ENCODE measurements at regions of chr2 and their contacts with region 1.

Region 1: DNA sequence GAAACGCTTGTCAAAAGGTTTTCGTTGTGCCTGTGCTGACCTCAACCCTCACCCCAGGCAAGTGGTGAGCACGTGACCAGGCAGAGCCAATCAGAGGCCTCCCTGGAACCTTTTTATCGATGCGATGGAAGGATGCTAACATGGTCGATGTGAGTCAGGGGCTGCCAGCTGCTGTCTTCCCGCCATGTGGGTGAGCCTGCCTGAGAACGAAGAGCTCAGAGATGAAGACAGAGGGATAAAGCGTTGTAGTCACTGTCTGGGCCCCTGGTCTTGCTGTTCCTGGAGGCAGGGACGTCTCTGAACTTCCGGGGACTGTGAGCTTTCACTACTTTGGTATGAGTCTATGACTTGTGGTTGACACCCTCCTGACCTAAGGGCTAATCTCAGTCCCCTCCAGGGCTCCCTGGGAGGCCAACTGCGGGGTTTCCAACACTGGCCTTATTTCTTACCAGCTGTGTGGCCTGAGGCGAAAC is 18.6 kb downstream of the DNMT3A start:
- DNase-seq: peak; percentile 51 to 79 (median 64)
- H3K4me3 ChIP-seq: peak overlapping the region in 1 of 2 donors; percentile 46
- H3K4me3 Mint-ChIP-seq: peak overlapping the region; percentile 85 to 91 (median 88)
- H3K27ac ChIP-seq: peak overlapping the region; percentile 53
- H3K27ac Mint-ChIP-seq: peak overlapping the region; percentile 81 to 98 (median 94)
- H3K4me1 ChIP-seq: peaks cover 33% of the 10 kb centered on the region
- H3K4me1 Mint-ChIP-seq: peaks cover 33 to 51% (median 39%) of the 10 kb centered on the region in 4 donors
- H3K27me3 ChIP-seq: no peaks in the 10 kb centered on the region
- H3K27me3 Mint-ChIP-seq: no peaks in the 10 kb centered on the region

Region 2: GRCh38 chr2:25184261-25184695 is 138.8 kb before region 1 on chr2:
- CTCF ChIA-PET with region 1: no interaction called
- POLR2A ChIA-PET with region 1: no interaction called
- intact Hi-C with region 1: no loop called
- DNase-seq: no peak
- H3K4me3 ChIP-seq: no peak overlapping the region
- H3K4me3 Mint-ChIP-seq: no peak overlapping the region
- H3K27ac ChIP-seq: no peak overlapping the region
- H3K27ac Mint-ChIP-seq: peak overlapping the region in 1 of 7 donors; percentile 11
- H3K4me1 ChIP-seq: no peaks in the 10 kb centered on the region
- H3K4me1 Mint-ChIP-seq: no peaks in the 10 kb centered on the region
- H3K27me3 ChIP-seq: no peaks in the 10 kb centered on the region
- H3K27me3 Mint-ChIP-seq: peaks cover 8 to 12% of the 10 kb centered on the region in 2 donors

Region 3: GRCh38 chr2:25337276-25337675 is 14.2 kb after region 1 on chr2:
- CTCF ChIA-PET with region 1: interaction called, 3 read pairs
- POLR2A ChIA-PET with region 1: interaction called, 21 read pairs
- intact Hi-C with region 1: loop called (anchors 2 kb)
- DNase-seq: no peak
- H3K4me3 ChIP-seq: no peak overlapping the region
- H3K4me3 Mint-ChIP-seq: peak overlapping the region; percentile 18 to 65 (median 56)
- H3K27ac ChIP-seq: peak overlapping the region; percentile 26
- H3K27ac Mint-ChIP-seq: peak overlapping the region; percentile 58 to 81 (median 70)
- H3K4me1 ChIP-seq: peaks cover 70% of the 10 kb centered on the region
- H3K4me1 Mint-ChIP-seq: peaks cover 45 to 75% (median 61%) of the 10 kb centered on the region in 4 donors
- H3K27me3 ChIP-seq: no peaks in the 10 kb centered on the region
- H3K27me3 Mint-ChIP-seq: no peaks in the 10 kb centered on the region

Region 4: GRCh38 chr2:25342372-25343186 is 19.5 kb after region 1 on chr2:
- CTCF ChIA-PET with region 1: interaction called, 3 read pairs
- POLR2A ChIA-PET with region 1: interaction called, 21 read pairs
- intact Hi-C with region 1: loop called (anchors 2 kb)
- DNase-seq: peak; percentile 78 to 83 (median 81)
- H3K4me3 ChIP-seq: peak overlapping the region in 1 of 2 donors; percentile 52
- H3K4me3 Mint-ChIP-seq: peak overlapping the region; percentile 66 to 89 (median 82)
- H3K27ac ChIP-seq: no peak overlapping the region
- H3K27ac Mint-ChIP-seq: peak overlapping the region in 3 of 7 donors; percentile 74 to 84 (median 74)
- H3K4me1 ChIP-seq: peaks cover 34% of the 10 kb centered on the region
- H3K4me1 Mint-ChIP-seq: peaks cover 10 to 35% (median 23%) of the 10 kb centered on the region in 4 donors
- H3K27me3 ChIP-seq: no peaks in the 10 kb centered on the region
- H3K27me3 Mint-ChIP-seq: no peaks in the 10 kb centered on the region